Activated CD4-positive, alpha-beta T cell treated with anti-CD3 and anti-CD28 coated beads for 36 hours (primary cell): ENCODE measurements at regions of chr3 and their contacts with region 1.

Region 1: DNA sequence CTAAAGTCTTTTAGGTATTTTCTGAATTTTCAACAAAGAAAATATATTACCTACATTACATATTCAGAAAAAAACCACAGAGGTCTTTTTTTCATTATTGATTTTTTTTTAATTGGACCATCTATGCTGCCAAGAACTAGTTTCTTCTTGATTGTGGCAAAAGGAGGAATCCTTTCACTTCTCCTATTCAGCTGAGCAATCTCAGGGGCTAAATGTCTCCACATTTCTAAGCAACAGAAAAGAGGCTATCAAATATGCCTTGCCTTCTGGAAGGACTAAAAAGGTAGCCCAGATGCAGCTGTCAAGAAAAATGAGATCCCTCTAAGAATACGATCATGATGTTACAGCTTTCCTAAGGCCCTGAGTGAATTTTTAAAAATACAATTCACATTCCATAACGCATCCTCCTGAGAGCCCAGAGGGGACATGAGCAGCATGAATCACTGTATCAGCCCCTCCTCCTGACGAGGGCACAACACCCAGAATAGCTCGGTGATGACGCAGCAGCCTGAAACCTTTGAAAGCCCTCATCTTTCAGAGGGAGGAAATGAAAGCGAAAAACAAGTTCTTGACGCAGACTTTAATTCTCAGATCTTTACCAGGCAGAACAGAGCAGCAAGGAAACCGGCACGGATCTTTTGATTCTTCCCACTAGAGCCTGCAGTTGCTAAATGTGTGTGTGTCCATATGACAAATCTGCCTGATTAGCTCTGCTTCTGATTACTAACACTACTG is 24.6 kb downstream of the RUBCN start:
- DNase-seq: peak; percentile 94
- ATAC-seq: peak; percentile 98
- H3K4me3 Mint-ChIP-seq: peak overlapping the region; percentile 51
- H3K27ac Mint-ChIP-seq: peak overlapping the region; percentile 89
- H3K4me1 Mint-ChIP-seq: peaks cover 36% of the 10 kb centered on the region
- H3K27me3 Mint-ChIP-seq: no peaks in the 10 kb centered on the region

Region 2: GRCh38 chr3:197511130-197511529 is 201.0 kb before region 1 on chr3:
- CTCF ChIA-PET with region 1: no interaction called
- POLR2A ChIA-PET with region 1: no interaction called
- intact Hi-C with region 1: no loop called
- DNase-seq: no peak
- ATAC-seq: no peak
- H3K4me3 Mint-ChIP-seq: no peak overlapping the region
- H3K27ac Mint-ChIP-seq: no peak overlapping the region
- H3K4me1 Mint-ChIP-seq: peaks cover 6% of the 10 kb centered on the region
- H3K27me3 Mint-ChIP-seq: no peaks in the 10 kb centered on the region

Region 3: DNA sequence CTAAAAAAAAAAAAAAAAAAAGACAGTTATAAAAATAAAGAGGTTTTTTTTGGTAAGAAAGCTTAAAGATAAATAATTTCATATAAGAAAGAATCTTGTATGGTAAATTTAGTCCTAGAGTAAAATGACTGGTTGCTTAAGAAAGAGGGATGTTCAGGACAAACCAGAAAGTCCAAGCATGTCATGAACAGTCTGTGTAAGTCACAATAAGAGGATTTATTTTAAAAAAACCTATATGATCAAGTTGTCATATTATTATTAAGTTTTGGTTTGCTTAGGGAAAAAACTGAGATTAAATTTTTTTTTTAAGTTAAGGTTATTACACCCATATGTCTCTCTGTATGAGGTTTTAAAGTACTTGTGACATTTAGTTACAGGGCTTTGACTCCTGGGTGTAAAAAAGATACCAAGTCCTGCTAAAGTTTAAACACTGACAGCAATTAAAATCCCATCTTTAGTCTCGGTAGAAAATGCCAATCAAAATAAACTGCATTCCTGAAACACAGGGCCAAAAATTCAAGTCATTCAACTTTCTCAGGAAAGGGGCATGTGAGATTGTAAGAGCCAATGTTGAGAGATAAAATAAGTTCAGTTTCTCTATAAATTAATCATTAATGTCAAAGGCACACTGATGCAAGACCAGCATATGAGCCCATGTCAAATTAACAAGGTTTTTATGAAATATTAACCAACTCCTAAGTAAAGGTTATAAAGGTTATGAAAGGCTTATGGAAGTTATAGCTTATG is 147.9 kb before region 1 on chr3:
- CTCF ChIA-PET with region 1: no interaction called
- POLR2A ChIA-PET with region 1: no interaction called
- intact Hi-C with region 1: no loop called
- DNase-seq: no peak
- ATAC-seq: no peak
- H3K4me3 Mint-ChIP-seq: no peak overlapping the region
- H3K27ac Mint-ChIP-seq: no peak overlapping the region
- H3K4me1 Mint-ChIP-seq: peaks cover 3% of the 10 kb centered on the region
- H3K27me3 Mint-ChIP-seq: peaks cover 18% of the 10 kb centered on the region

Region 4: DNA sequence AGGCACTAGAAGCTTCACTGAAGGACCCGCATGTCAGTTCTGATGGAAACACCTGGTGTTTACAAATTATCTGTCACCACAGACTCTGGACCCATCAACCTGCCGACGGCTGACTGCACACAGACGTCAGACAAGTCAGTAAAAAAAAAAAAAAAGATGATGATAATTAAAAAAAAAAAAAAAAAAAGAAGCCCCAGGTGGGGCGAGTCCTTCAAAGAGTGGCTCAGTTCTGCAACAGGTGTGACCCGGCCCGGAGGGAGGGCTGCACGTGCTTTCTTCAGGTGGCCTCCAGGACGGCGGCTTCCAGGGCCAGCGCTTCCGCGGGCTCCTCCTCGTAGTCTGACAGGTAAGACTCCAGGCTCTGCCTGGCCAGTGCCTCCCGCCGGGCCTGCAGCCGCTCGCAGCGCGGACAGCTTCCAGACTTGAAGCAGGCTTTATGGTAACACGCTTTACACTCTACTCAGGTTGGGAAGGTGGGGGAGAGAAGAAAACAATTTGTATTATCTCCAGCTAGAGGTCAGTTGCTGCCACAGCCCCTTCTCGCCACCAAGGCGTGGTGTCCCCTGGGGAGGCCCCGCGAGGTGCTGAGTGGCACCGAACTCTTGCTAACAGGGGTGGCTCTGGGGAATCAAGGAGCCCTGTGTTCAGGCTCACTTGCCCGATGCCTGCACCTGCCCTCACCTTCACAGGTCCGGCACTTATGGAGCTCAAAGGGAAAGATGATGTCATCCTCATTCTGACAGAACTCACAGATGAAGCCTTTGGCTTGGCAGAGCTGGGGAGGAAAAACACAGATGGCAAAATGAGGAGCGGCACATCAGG is 37.2 kb before region 1 on chr3:
- CTCF ChIA-PET with region 1: no interaction called
- POLR2A ChIA-PET with region 1: no interaction called
- intact Hi-C with region 1: no loop called
- DNase-seq: no peak
- ATAC-seq: no peak
- H3K4me3 Mint-ChIP-seq: no peak overlapping the region
- H3K27ac Mint-ChIP-seq: no peak overlapping the region
- H3K4me1 Mint-ChIP-seq: no peaks in the 10 kb centered on the region
- H3K27me3 Mint-ChIP-seq: no peaks in the 10 kb centered on the region

Region 5: GRCh38 chr3:197749601-197750395 is 37.7 kb after region 1 on chr3 and contains the start of gene FYTTD1:
- CTCF ChIA-PET with region 1: interaction called, 5 read pairs
- POLR2A ChIA-PET with region 1: interaction called, 3 read pairs
- intact Hi-C with region 1: loop called (anchors 1 kb)
- DNase-seq: peak; percentile 89
- ATAC-seq: peak; percentile 81
- H3K4me3 Mint-ChIP-seq: peak within 1 kb of the TSS; percentile 89
- H3K27ac Mint-ChIP-seq: peak within 1 kb of the TSS; percentile 87
- H3K4me1 Mint-ChIP-seq: peaks cover 37% of the 10 kb centered on the region
- H3K27me3 Mint-ChIP-seq: no peaks in the 10 kb centered on the region
- total RNA-seq, gene FYTTD1: 20.7 to 25.6 TPM

Region 6: DNA sequence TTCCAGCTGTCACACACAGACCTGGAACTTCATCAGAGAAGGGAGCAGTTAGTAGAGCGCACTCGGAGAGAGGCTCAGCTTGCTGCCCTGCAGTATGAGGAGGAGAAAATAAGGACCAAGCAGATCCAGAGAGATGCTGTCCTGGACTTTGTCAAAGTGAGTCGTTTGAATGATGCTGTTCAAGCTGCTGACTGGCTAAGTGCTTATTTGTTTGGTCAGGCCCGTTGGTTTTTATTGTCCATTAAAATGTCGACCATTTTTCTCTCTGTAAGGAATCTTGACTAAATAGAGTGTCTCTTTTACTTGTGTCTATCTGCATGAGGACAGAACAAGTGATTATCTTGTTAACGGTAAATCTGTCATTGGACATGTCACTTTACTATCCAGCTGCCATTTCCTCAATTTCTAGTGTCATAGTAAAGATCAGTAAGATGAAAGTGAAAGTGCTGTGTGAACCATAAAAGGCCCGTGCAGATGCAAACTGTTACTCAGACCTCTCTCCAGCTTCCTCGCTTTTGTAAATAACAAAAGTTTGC is 135.8 kb after region 1 on chr3:
- CTCF ChIA-PET with region 1: no interaction called
- POLR2A ChIA-PET with region 1: no interaction called
- intact Hi-C with region 1: loop called in 1 of 2 experiments (anchors 5 kb)
- DNase-seq: peak; percentile 38
- ATAC-seq: peak; percentile 90
- H3K4me3 Mint-ChIP-seq: peak overlapping the region; percentile 66
- H3K27ac Mint-ChIP-seq: peak overlapping the region; percentile 93
- H3K4me1 Mint-ChIP-seq: peaks cover 29% of the 10 kb centered on the region
- H3K27me3 Mint-ChIP-seq: no peaks in the 10 kb centered on the region

Region 7: DNA sequence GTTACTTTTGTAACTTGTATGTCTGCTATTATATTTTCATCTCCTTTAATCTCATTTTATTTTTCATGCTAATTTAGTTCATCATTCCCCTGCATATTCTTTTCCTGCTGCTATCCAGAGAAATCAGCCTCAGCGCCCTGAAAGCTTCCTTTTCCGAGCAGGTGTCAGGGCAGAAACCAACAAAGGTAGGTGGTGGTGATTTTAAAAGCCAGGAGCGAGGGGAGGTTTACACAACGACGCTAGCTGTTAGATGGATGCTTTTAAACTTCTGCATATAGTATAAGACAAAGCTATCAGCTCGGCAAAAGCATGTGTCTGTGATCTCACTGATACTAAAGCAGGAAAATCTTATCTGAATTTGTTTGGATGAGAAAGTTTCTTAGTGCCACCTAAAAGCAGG is 153.9 kb after region 1 on chr3:
- CTCF ChIA-PET with region 1: no interaction called
- POLR2A ChIA-PET with region 1: no interaction called
- intact Hi-C with region 1: no loop called
- DNase-seq: no peak
- ATAC-seq: no peak
- H3K4me3 Mint-ChIP-seq: no peak overlapping the region
- H3K27ac Mint-ChIP-seq: no peak overlapping the region
- H3K4me1 Mint-ChIP-seq: peaks cover 12% of the 10 kb centered on the region
- H3K27me3 Mint-ChIP-seq: no peaks in the 10 kb centered on the region

Region 8: DNA sequence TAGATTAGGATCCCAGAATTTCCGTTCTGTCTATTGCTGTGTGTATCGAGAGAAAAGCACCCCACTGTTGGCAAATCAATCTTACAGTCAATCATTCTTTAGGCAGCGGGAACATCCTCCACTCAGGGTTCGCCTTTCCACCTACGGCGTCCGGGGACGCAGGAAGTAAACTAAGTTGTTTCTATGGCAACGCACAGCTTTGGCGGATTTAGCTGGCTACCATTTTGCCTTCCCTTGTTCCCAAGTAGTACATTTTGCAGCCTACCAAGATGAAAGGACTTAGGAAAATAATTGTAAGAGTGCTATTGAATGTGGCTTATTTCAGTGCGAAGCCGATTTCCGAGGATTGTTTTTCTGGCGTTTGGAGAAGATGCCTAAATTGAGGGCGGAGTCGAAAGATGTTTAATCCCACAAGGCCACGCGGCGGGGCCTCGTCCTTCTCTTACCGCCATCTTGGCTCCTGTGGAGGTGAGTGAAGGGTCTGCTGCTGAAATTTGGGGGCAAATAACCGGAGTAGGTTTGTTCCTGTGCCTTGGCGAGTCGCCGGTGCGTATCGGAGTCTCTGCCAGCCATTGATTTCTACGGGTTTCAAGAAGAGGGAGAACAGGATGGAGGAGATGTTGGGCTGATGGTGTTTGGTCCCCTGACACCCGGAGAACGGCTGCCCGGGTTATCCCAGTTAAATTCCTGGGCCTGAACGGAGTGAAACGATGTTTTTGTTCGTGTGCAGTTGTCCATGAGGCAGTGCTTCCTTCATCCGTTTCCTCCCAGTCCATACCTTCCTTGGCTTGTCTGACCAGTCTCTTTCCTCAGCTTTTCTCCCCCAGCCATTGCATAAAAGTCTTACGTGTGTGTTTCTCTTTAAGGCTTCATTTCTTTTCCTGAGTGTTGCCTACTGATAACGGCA is 237.9 kb after region 1 on chr3 and contains the start of gene RPL35A:
- CTCF ChIA-PET with region 1: interaction called, 3 read pairs
- POLR2A ChIA-PET with region 1: no interaction called
- intact Hi-C with region 1: loop called in 1 of 2 experiments (anchors 2 kb)
- DNase-seq: peak; percentile 90
- ATAC-seq: peak; percentile 89
- H3K4me3 Mint-ChIP-seq: peak within 1 kb of the TSS; percentile 87
- H3K27ac Mint-ChIP-seq: peak within 1 kb of the TSS; percentile 97
- H3K4me1 Mint-ChIP-seq: peaks cover 47% of the 10 kb centered on the region
- H3K27me3 Mint-ChIP-seq: no peaks in the 10 kb centered on the region
- total RNA-seq, gene RPL35A: 1,121 to 1,734 TPM

Region 9: GRCh38 chr3:198071602-198072285 is 359.6 kb after region 1 on chr3:
- CTCF ChIA-PET with region 1: no interaction called
- POLR2A ChIA-PET with region 1: no interaction called
- intact Hi-C with region 1: loop called in 1 of 2 experiments (anchors 5 kb)
- DNase-seq: peak; percentile 77
- ATAC-seq: peak; percentile 100
- H3K4me3 Mint-ChIP-seq: peak overlapping the region; percentile 36
- H3K27ac Mint-ChIP-seq: peak overlapping the region; percentile 95
- H3K4me1 Mint-ChIP-seq: peaks cover 43% of the 10 kb centered on the region
- H3K27me3 Mint-ChIP-seq: peaks cover 12% of the 10 kb centered on the region